SK-N-SH (cell line): ENCODE measurements at regions of chr10 and their contacts with region 1.

Region 1: DNA sequence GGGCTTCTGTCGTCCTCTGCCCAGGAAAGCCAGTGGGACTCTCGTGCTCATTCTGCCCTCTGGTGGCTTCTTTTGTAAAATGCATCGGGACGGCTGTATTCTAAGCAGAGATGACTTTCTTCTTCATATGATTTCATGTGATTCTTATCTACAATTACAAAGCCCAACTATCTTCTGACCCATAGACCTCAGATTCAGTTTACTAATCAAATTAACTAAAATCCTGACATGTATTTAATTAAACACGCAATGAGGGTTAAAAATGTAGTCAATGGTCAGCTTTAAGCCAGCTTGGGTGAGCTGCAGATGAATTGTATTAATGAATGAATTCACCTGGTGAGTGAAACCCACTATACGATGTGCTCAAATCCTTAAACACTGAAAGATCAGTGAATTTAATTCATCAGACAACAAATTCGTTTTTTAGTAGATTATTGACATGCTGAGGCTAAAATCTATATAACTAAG is 117.6 kb upstream of the FAM204A start:
- DNase-seq: peak; percentile 63
- H3K4me3 ChIP-seq: peak overlapping the region in 1 of 2 experiments; percentile 12; a peak in 1 of 4 replicates
- H3K27ac ChIP-seq: no peak overlapping the region
- H3K4me1 ChIP-seq: no peaks in the 10 kb centered on the region; a peak in 2 of 4 replicates
- H3K27me3 ChIP-seq: no peaks in the 10 kb centered on the region
- CTCF ChIP-seq: peak; percentile 78
- EP300 ChIP-seq: no peak
- RAD21 ChIP-seq: peak; percentile 86

Region 2: DNA sequence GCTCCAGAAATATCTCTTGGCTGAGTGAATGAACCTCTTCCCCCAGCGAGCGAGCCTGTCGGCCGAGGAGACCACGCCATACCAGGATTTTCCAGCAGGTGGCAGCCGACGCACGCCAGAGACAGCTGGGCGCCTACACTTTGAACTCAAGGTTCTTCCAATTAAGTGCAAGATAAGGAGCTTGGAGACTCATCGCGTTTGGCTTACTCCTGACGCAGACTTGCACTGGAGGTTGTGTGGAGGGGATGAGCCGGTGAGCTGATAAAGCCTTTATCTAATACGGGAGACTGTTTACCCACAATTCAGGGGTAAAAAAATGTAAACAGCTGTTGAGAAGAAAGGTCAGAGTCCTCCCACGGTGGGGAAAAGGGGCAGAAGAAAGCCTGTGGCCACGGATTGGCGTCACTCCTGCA is 963.1 kb before region 1 on chr10:
- CTCF ChIA-PET with region 1: interaction called, 47 read pairs
- POLR2A ChIA-PET with region 1: no interaction called
- DNase-seq: peak; percentile 78
- H3K4me3 ChIP-seq: peak overlapping the region in 1 of 2 experiments; percentile 33; a peak in 1 of 4 replicates
- H3K27ac ChIP-seq: no peak overlapping the region
- H3K4me1 ChIP-seq: peaks cover 0 to 3% of the 10 kb centered on the region in 2 experiments; a peak in 1 of 4 replicates
- H3K27me3 ChIP-seq: no peaks in the 10 kb centered on the region
- CTCF ChIP-seq: peak; percentile 91
- EP300 ChIP-seq: no peak
- RAD21 ChIP-seq: peak; percentile 98

Region 3: GRCh38 chr10:118423800-118424479 is 35.8 kb before region 1 on chr10:
- CTCF ChIA-PET with region 1: interaction called, 20 read pairs
- POLR2A ChIA-PET with region 1: no interaction called
- DNase-seq: peak; percentile 64
- H3K4me3 ChIP-seq: peak overlapping the region in 1 of 2 experiments; percentile 52; a peak in 1 of 4 replicates
- H3K27ac ChIP-seq: no peak overlapping the region
- H3K4me1 ChIP-seq: no peaks in the 10 kb centered on the region; a peak in 1 of 4 replicates
- H3K27me3 ChIP-seq: no peaks in the 10 kb centered on the region; the same call in 1 of the 2 replicates
- CTCF ChIP-seq: peak; percentile 74
- EP300 ChIP-seq: no peak
- RAD21 ChIP-seq: peak; percentile 81

Region 4: GRCh38 chr10:118447478-118448270 is 12.1 kb before region 1 on chr10:
- CTCF ChIA-PET with region 1: interaction called, 61 read pairs
- POLR2A ChIA-PET with region 1: no interaction called
- DNase-seq: peak; percentile 21
- H3K4me3 ChIP-seq: no peak overlapping the region
- H3K27ac ChIP-seq: no peak overlapping the region
- H3K4me1 ChIP-seq: peaks cover 0 to 3% of the 10 kb centered on the region in 2 experiments; a peak in 1 of 4 replicates
- H3K27me3 ChIP-seq: no peaks in the 10 kb centered on the region
- CTCF ChIP-seq: no peak
- EP300 ChIP-seq: no peak
- RAD21 ChIP-seq: no peak

Region 5: GRCh38 chr10:118488710-118489497 is 29.1 kb after region 1 on chr10:
- CTCF ChIA-PET with region 1: interaction called, 11 read pairs
- POLR2A ChIA-PET with region 1: no interaction called
- DNase-seq: no peak
- H3K4me3 ChIP-seq: no peak overlapping the region
- H3K27ac ChIP-seq: no peak overlapping the region
- H3K4me1 ChIP-seq: no peaks in the 10 kb centered on the region
- H3K27me3 ChIP-seq: no peaks in the 10 kb centered on the region
- CTCF ChIP-seq: no peak
- EP300 ChIP-seq: no peak
- RAD21 ChIP-seq: no peak